ENCODE measurements at regions of chr3 and their contacts with region 1.

Region 1: GRCh38 chr3:101988591-101988990 is 139.3 kb downstream of the NFKBIZ start:
- DNase-seq: peak; percentile 29
- ATAC-seq: peak; percentile 74
- H3K4me3 Mint-ChIP-seq: no peak overlapping the region
- H3K27ac Mint-ChIP-seq: no peak overlapping the region
- H3K4me1 Mint-ChIP-seq: peaks cover 19% of the 10 kb centered on the region
- H3K27me3 Mint-ChIP-seq: no peaks in the 10 kb centered on the region

Region 2: GRCh38 chr3:101928890-101929289 is 59.7 kb before region 1 on chr3:
- CTCF ChIA-PET with region 1: no interaction called
- POLR2A ChIA-PET with region 1: no interaction called
- intact Hi-C with region 1: loop called in 1 of 2 experiments (anchors 5 kb)
- DNase-seq: no peak
- ATAC-seq: no peak
- H3K4me3 Mint-ChIP-seq: no peak overlapping the region
- H3K27ac Mint-ChIP-seq: no peak overlapping the region
- H3K4me1 Mint-ChIP-seq: peaks cover 20% of the 10 kb centered on the region
- H3K27me3 Mint-ChIP-seq: peaks cover 3% of the 10 kb centered on the region

Region 3: DNA sequence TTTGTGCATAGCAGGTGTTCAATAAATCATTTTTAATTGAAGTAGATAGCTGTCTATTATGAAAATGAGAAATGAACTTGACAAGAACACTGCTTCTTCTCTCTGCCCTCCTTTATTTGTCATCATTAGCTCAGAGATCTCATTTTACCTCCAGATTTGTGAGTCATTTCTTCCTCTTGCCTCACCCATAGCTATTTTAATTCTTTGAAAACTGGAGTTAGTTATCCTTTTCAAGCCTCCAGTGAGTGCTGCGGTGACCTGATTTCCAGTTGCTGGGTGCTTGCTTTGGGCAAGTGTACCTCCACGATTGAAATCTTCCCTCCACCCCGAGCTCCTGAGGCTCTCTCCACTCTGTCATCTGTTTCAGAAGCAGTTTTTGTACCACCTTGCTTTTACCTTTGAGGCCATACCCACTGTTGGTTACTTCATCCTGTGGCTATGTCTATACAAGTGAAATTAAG is 24.7 kb before region 1 on chr3:
- CTCF ChIA-PET with region 1: interaction called, 3 read pairs
- POLR2A ChIA-PET with region 1: no interaction called
- intact Hi-C with region 1: loop called in 1 of 2 experiments (anchors 1 kb)
- DNase-seq: peak; percentile 59
- ATAC-seq: peak; percentile 89
- H3K4me3 Mint-ChIP-seq: no peak overlapping the region
- H3K27ac Mint-ChIP-seq: peak overlapping the region; percentile 45
- H3K4me1 Mint-ChIP-seq: peaks cover 27% of the 10 kb centered on the region
- H3K27me3 Mint-ChIP-seq: no peaks in the 10 kb centered on the region

Region 4: DNA sequence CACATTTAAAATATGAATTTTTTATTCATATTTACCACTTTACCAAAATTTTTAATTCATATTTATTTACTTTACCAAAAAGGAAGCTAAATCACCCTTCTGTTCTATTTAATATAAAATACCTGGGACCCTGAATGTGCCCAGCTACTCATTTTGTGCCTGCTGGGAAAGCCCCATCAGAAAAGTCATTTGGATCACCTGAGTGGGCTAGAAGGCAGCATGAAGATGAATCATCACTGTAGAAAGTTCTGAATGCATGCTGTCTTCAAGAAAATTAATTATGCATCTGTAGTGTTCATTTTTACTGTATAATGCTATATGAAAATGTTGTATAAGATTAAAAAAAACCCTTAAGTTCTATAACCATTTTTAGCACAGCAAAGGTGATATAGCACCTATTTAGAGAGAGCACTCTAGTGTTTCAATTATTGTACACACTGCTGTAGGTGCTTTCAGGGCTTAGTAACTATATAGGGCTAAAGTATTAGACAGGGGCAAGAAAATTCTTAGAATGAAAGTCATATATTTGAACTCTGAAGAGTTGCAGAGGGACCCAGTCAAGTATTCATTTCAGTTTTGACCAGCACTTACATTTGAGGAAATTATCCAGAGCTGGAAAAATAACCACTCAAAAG is 35.8 kb after region 1 on chr3:
- CTCF ChIA-PET with region 1: no interaction called
- POLR2A ChIA-PET with region 1: no interaction called
- intact Hi-C with region 1: loop called in 1 of 2 experiments (anchors 1 kb)
- DNase-seq: peak; percentile 52
- ATAC-seq: peak; percentile 96
- H3K4me3 Mint-ChIP-seq: no peak overlapping the region
- H3K27ac Mint-ChIP-seq: no peak overlapping the region
- H3K4me1 Mint-ChIP-seq: peaks cover 17% of the 10 kb centered on the region
- H3K27me3 Mint-ChIP-seq: no peaks in the 10 kb centered on the region